ENCODE measurements at regions of chr19 and their contacts with region 1.

Region 1: GRCh38 chr19:51473009-51473707 is 5.2 kb upstream of the CEACAM18 start:
- DNase-seq: peak; percentile 72 to 86 (median 81)
- H3K4me3 ChIP-seq: no peak overlapping the region
- H3K27ac ChIP-seq: no peak overlapping the region
- H3K4me1 ChIP-seq: peaks cover 0 to 24% (median 10%) of the 10 kb centered on the region in 4 experiments
- H3K27me3 ChIP-seq: peaks cover 0 to 12% (median 5%) of the 10 kb centered on the region in 5 experiments

Region 2: GRCh38 chr19:51430221-51430620 is 42.9 kb before region 1 on chr19:
- CTCF ChIA-PET with region 1: no interaction called
- POLR2A ChIA-PET with region 1: no interaction called
- DNase-seq: no peak
- H3K4me3 ChIP-seq: no peak overlapping the region
- H3K27ac ChIP-seq: no peak overlapping the region
- H3K4me1 ChIP-seq: peaks cover 0 to 7% (median 3%) of the 10 kb centered on the region in 4 experiments
- H3K27me3 ChIP-seq: peaks cover 0 to 5% (median 0%) of the 10 kb centered on the region in 5 experiments

Region 3: DNA sequence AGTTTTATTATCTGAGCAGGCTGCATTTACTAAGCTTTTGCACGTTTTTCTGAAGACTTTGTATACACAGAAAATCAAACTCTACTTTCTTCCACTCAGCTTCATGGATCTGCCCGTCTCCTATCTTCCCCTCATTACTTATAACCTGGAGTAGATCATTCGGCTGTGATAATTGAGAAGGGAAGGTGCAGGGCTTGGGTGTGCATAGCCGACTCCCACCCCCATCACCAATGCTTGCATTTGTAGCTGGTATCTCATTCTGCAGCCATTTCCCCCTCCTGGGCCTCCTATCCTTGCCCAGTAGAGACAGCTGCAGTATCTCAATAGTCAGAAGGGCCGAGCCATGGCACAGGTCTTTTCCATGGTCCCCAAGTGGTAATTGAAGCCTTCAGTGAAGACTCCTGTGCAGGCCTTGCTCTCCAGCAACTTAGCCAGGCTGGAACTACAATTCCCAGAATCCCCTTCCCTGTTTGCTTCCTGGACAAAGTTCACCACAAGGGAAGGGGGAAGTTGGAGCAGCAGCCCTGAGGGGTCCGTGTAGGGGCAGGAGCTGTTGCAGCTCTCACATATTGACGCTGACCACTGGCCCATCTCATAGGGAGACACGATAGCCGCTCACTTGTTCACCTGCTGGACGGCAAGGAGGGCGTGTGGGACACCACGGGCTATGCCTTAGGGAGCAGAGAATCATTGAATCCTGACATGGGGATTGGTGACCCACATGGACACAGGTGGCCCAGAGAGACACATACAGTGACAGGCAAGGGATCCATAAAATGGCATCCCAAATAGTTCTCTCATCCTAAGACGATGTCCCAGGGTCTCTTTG is 12.8 kb before region 1 on chr19:
- CTCF ChIA-PET with region 1: interaction called, 26 read pairs
- POLR2A ChIA-PET with region 1: no interaction called
- DNase-seq: peak; percentile 57 to 80 (median 71)
- H3K4me3 ChIP-seq: peak overlapping the region in 6 of 7 experiments; percentile 25 to 80 (median 52)
- H3K27ac ChIP-seq: no peak overlapping the region
- H3K4me1 ChIP-seq: peaks cover 8 to 59% (median 36%) of the 10 kb centered on the region in 4 experiments
- H3K27me3 ChIP-seq: no peaks in the 10 kb centered on the region

Region 4: GRCh38 chr19:51514866-51515481 is 41.8 kb after region 1 on chr19:
- CTCF ChIA-PET with region 1: interaction called, 11 read pairs
- POLR2A ChIA-PET with region 1: no interaction called
- DNase-seq: peak; percentile 62 to 79 (median 72)
- H3K4me3 ChIP-seq: no peak overlapping the region
- H3K27ac ChIP-seq: no peak overlapping the region
- H3K4me1 ChIP-seq: peaks cover 0 to 2% (median 0%) of the 10 kb centered on the region in 4 experiments
- H3K27me3 ChIP-seq: peaks cover 0 to 12% (median 3%) of the 10 kb centered on the region in 5 experiments

Region 5: GRCh38 chr19:51654783-51655182 is 181.6 kb after region 1 on chr19:
- CTCF ChIA-PET with region 1: interaction called, 92 read pairs
- POLR2A ChIA-PET with region 1: no interaction called
- DNase-seq: peak in 2 of 3 donors; percentile 42 to 53
- H3K4me3 ChIP-seq: no peak overlapping the region
- H3K27ac ChIP-seq: no peak overlapping the region
- H3K4me1 ChIP-seq: peaks cover 0 to 22% (median 3%) of the 10 kb centered on the region in 4 experiments
- H3K27me3 ChIP-seq: peaks cover 0 to 11% (median 0%) of the 10 kb centered on the region in 5 experiments

Region 6: DNA sequence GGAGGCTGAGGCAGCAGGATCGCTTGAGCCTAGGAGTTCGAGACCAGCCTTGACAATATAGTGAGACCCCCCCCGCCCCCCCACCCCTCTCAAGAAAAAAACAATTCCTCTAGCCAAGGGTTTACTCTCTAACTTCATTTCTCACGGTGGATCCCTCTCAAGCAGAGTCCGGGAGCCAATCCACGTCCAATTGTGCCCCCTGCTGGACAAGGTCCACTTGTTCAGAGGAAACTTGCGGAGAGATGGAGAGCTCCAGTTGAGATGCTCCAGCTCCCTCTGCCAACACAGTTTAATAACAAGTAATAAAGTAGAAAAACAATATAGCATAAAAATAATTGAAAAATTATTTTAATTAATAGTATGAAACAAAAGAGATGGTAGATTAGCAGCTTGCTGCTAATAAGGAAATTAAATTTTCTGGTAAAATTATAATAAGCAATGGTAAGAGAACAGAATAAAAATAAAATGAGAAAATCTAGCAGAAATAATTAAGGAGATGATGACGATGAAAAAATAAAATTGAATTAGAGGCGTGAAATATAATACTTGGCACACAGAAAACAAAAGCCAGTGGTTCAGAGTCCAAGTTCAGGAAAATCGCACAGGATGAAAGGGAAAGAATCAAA is 187.9 kb after region 1 on chr19:
- CTCF ChIA-PET with region 1: interaction called, 92 read pairs
- POLR2A ChIA-PET with region 1: no interaction called
- DNase-seq: peak; percentile 78 to 88 (median 85)
- H3K4me3 ChIP-seq: no peak overlapping the region
- H3K27ac ChIP-seq: no peak overlapping the region
- H3K4me1 ChIP-seq: peaks cover 0 to 12% (median 1%) of the 10 kb centered on the region in 4 experiments
- H3K27me3 ChIP-seq: peaks cover 0 to 17% (median 3%) of the 10 kb centered on the region in 5 experiments

Measured in common myeloid progenitor, CD34-positive (primary cell).